ENCODE measurements at regions of chr16 and their contacts with region 1.

Region 1: DNA sequence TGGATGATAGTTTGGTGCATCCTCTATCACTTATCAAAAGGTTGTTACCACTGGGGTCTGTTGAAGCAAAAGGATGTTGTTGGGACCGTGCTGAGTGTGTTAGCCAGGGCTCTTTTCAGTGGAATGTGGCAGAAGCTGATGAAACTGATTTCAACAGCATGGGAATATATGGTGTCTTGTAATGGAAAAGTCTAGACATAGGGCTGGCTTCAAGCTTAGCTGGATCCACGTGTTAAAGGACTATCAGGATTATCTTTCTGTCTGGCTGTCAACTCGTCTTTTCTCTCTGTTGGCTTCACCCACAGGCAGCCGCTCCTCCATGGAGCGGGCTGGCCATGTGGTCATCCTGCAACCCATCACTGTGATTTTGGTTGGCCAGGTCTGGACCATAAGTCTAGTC is 8.7 kb downstream of the SNX29 start:
- DNase-seq: no peak
- ATAC-seq: no peak
- H3K4me3 ChIP-seq: no peak overlapping the region
- H3K27ac ChIP-seq: no peak overlapping the region
- H3K4me1 ChIP-seq: no peaks in the 10 kb centered on the region
- H3K27me3 ChIP-seq: no peaks in the 10 kb centered on the region
- CTCF ChIP-seq: no peak

Region 2: GRCh38 chr16:11283820-11284248 is 701.4 kb before region 1 on chr16:
- CTCF ChIA-PET with region 1: no interaction called
- POLR2A ChIA-PET with region 1: no interaction called
- intact Hi-C with region 1: no loop called
- DNase-seq: no peak
- ATAC-seq: no peak
- H3K4me3 ChIP-seq: no peak overlapping the region
- H3K27ac ChIP-seq: no peak overlapping the region
- H3K4me1 ChIP-seq: no peaks in the 10 kb centered on the region
- H3K27me3 ChIP-seq: no peaks in the 10 kb centered on the region
- CTCF ChIP-seq: no peak

Region 3: DNA sequence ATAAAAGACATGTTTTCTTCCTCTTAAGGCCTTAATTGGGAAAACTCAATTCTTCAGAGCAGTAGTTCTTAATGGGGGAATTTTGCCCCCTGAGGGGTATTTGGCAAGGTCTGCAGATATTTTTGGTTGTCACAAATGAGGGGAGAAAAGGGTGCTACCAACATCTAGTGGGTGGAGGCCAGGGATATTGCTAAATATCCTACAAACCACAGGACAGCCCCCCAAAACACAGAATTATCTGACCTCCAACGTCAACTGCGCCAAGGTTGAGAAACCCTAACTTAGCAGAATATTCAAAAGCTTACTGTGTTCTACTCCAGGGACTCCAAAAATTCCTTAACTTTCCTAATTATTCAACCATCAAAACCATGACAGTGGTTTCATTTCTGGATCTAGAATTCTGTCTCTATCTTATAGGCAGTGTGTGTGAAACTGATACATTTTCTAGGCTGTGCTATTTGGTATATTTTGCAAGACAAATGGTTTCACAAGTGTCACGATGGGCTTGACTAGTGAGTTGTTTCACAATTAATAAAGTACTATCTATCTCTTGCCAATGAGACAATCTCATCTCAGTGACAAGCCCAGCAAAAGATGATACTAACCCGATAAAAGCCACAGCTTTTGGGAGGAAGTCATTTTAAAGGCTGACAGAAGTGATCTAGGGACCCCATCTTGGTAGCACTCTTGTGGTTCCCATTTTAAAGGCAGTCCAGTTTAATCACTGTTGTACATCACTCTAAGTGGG is 257.3 kb before region 1 on chr16:
- CTCF ChIA-PET with region 1: no interaction called
- POLR2A ChIA-PET with region 1: no interaction called
- intact Hi-C with region 1: no loop called
- DNase-seq: no peak
- ATAC-seq: no peak
- H3K4me3 ChIP-seq: no peak overlapping the region
- H3K27ac ChIP-seq: no peak overlapping the region
- H3K4me1 ChIP-seq: no peaks in the 10 kb centered on the region
- H3K27me3 ChIP-seq: no peaks in the 10 kb centered on the region
- CTCF ChIP-seq: no peak

Region 4: DNA sequence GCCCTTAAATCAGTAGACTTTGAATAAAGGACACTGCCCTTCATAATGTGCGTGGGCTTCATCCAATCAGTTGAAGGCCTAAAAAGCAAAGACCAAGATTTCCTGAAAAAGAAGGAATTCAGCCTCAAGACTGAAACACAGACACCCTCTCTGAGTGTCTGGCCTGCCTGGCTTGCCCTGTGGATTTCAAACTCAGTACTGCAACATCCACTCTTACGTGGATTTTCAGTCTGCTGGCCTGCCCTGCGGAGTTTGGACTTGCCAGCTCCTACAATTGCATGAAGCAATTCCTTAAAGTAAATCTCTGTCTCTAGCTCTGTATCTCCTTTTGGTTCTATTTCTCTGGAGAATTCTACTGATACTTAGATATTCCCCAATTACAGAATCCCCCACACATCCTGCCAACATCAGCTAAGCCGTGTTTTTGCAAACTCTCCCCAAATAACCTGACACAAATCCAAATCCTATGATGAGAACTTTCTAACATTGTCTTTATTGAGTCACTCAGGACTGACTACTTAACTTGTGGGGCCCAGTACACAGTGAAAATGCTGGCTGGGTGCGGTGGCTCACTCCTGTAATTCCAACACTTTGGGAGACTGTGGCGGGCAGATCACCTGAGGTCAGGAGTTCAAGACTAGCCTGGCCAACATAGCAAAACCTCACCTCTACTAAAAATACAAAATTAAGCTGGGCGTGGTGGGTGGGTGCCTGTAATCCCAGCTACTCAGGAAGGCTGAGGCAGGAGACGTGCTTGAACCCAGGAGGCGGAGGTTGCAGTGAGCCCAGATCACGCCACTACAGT is 27.5 kb before region 1 on chr16:
- CTCF ChIA-PET with region 1: no interaction called
- POLR2A ChIA-PET with region 1: interaction called, 10 read pairs
- intact Hi-C with region 1: no loop called
- DNase-seq: no peak
- ATAC-seq: no peak
- H3K4me3 ChIP-seq: no peak overlapping the region
- H3K27ac ChIP-seq: no peak overlapping the region
- H3K4me1 ChIP-seq: peaks cover 12% of the 10 kb centered on the region
- H3K27me3 ChIP-seq: no peaks in the 10 kb centered on the region
- CTCF ChIP-seq: no peak

Region 5: GRCh38 chr16:13645591-13646245 is 1660.5 kb after region 1 on chr16:
- CTCF ChIA-PET with region 1: no interaction called
- POLR2A ChIA-PET with region 1: no interaction called
- intact Hi-C with region 1: no loop called
- DNase-seq: no peak
- ATAC-seq: no peak
- H3K4me3 ChIP-seq: no peak overlapping the region
- H3K27ac ChIP-seq: no peak overlapping the region
- H3K4me1 ChIP-seq: no peaks in the 10 kb centered on the region
- H3K27me3 ChIP-seq: no peaks in the 10 kb centered on the region
- CTCF ChIP-seq: no peak